CD14-positive monocyte (primary cell): ENCODE measurements at regions of chr16 and their contacts with region 1.

Region 1: GRCh38 chr16:81366316-81366932 is 51.7 kb downstream of the GAN start:
- DNase-seq: peak; percentile 28 to 54 (median 38)
- H3K4me3 ChIP-seq: no peak overlapping the region
- H3K4me3 Mint-ChIP-seq: no peak overlapping the region
- H3K27ac ChIP-seq: no peak overlapping the region
- H3K27ac Mint-ChIP-seq: peak overlapping the region in 1 of 7 donors; percentile 7
- H3K4me1 ChIP-seq: no peaks in the 10 kb centered on the region
- H3K4me1 Mint-ChIP-seq: no peaks in the 10 kb centered on the region
- H3K27me3 ChIP-seq: no peaks in the 10 kb centered on the region
- H3K27me3 Mint-ChIP-seq: no peaks in the 10 kb centered on the region
- CTCF ChIP-seq: peak; percentile 82

Region 2: DNA sequence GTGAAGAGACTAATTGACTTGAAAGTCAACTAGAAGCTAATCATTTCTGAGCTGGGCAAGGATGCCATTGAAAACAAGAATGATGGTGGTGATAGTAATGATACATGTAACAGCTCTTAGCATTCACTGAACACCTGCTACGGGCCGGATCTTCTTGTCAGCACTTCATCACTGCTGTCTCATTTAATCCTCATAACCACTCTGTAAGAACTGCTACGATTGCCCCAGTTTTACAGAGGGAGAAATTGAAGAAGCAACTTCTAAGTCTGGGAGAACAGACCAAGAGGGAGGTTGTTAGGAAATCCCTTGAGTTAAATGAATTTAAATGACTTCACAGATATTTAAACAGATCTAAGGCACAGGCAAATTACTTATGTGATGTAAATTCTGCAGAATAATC is 58.7 kb before region 1 on chr16:
- intact Hi-C with region 1: no loop called
- DNase-seq: no peak
- H3K4me3 ChIP-seq: no peak overlapping the region
- H3K4me3 Mint-ChIP-seq: no peak overlapping the region
- H3K27ac ChIP-seq: no peak overlapping the region
- H3K27ac Mint-ChIP-seq: no peak overlapping the region
- H3K4me1 ChIP-seq: no peaks in the 10 kb centered on the region
- H3K4me1 Mint-ChIP-seq: peaks cover 5% of the 10 kb centered on the region
- H3K27me3 ChIP-seq: no peaks in the 10 kb centered on the region
- H3K27me3 Mint-ChIP-seq: peaks cover 0 to 4% (median 1%) of the 10 kb centered on the region in 3 donors
- CTCF ChIP-seq: no peak

Region 3: DNA sequence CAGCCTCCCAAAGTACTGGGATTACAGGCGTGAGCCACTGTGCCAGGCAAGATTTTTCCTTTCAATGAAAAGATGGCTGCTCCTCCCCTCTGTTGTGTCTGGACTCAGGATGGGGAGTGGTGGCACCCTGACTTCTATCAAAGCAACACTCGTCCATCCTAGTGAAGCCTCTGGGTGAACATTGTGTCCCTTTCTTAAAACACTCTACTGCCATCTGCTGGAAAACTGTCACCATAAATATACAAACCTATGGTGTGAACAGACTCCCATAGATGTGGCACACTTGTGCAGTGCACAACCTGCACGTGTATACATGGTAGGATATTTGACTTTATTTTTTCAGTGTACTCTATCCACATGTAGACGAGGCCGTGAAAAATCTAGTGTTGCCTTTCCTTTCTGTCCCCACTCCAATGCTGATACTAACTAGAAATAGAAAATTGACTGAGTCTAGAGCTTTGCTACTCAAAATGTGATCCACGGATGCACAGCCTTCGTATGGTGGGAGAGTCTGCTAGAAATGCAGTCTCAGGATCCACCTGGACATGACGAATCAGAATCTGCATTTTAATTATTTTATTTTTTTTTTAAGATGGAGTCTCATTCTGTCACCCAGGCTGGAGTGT is 356.8 kb after region 1 on chr16:
- intact Hi-C with region 1: loop called (anchors 2 to 5 kb)
- DNase-seq: peak; percentile 57 to 71 (median 67)
- H3K4me3 ChIP-seq: no peak overlapping the region
- H3K4me3 Mint-ChIP-seq: no peak overlapping the region
- H3K27ac ChIP-seq: no peak overlapping the region
- H3K27ac Mint-ChIP-seq: no peak overlapping the region
- H3K4me1 ChIP-seq: peaks cover 10% of the 10 kb centered on the region in 2 donors
- H3K4me1 Mint-ChIP-seq: peaks cover 14% of the 10 kb centered on the region
- H3K27me3 ChIP-seq: no peaks in the 10 kb centered on the region
- H3K27me3 Mint-ChIP-seq: peaks cover 0 to 10% (median 4%) of the 10 kb centered on the region in 3 donors
- CTCF ChIP-seq: peak; percentile 80

Region 4: DNA sequence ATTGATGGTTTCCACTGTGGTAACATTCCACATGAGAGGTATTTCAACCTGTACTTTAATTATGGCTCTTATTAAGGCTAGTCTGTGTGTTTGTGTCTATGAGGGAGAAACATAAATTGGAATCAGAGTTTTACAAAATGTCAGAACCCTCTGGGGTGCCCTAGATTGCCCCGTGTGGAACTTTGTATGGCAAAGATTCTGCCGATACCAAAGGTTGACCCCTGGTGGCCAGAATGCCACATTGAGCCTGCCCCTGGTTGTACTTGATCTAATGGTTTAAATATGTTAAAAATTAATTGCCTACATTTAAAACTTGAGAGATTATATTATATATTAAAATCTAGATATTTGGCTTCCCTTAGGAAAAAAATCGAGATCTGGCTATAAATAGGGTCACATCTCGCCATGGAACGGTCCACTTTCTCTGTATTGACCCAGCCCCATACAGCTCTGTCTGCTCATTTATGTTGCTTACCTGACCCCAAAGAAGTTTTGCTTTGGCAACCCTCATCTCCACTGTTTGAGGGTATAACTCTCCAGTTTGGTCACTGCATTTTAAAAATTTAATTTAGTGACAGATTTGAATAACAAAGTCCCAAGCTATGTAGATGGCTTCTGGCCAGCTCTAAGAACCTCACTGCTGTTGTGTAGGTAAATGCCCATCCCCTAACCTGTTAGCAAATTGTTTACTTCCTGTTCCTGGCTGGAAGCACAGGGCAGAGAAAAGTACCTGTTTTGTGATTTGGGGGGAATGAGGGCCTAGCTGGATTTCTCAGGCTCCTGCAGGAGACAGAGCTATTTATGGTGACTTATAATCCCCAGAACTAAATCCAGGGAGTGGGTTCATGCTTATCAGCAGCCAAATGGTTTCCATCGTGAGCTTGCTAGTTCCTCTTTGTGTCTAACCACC is 507.7 kb after region 1 on chr16:
- intact Hi-C with region 1: loop called (anchors 5 kb)
- DNase-seq: peak; percentile 49 to 66 (median 53)
- H3K4me3 ChIP-seq: no peak overlapping the region
- H3K4me3 Mint-ChIP-seq: no peak overlapping the region
- H3K27ac ChIP-seq: peak overlapping the region in 1 of 2 donors; percentile 16
- H3K27ac Mint-ChIP-seq: peak overlapping the region in 4 of 7 donors; percentile 15 to 82 (median 54)
- H3K4me1 ChIP-seq: peaks cover 0 to 5% of the 10 kb centered on the region in 2 donors
- H3K4me1 Mint-ChIP-seq: peaks cover 4% of the 10 kb centered on the region
- H3K27me3 ChIP-seq: no peaks in the 10 kb centered on the region
- H3K27me3 Mint-ChIP-seq: no peaks in the 10 kb centered on the region
- CTCF ChIP-seq: peak; percentile 96

Region 5: GRCh38 chr16:81879625-81880024 is 513.2 kb after region 1 on chr16:
- intact Hi-C with region 1: loop called (anchors 5 kb)
- DNase-seq: no peak
- H3K4me3 ChIP-seq: no peak overlapping the region
- H3K4me3 Mint-ChIP-seq: no peak overlapping the region
- H3K27ac ChIP-seq: no peak overlapping the region
- H3K27ac Mint-ChIP-seq: no peak overlapping the region
- H3K4me1 ChIP-seq: no peaks in the 10 kb centered on the region
- H3K4me1 Mint-ChIP-seq: no peaks in the 10 kb centered on the region
- H3K27me3 ChIP-seq: no peaks in the 10 kb centered on the region
- H3K27me3 Mint-ChIP-seq: no peaks in the 10 kb centered on the region
- CTCF ChIP-seq: no peak